ENCODE measurements at regions of chr5 and their contacts with region 1.

Region 1: DNA sequence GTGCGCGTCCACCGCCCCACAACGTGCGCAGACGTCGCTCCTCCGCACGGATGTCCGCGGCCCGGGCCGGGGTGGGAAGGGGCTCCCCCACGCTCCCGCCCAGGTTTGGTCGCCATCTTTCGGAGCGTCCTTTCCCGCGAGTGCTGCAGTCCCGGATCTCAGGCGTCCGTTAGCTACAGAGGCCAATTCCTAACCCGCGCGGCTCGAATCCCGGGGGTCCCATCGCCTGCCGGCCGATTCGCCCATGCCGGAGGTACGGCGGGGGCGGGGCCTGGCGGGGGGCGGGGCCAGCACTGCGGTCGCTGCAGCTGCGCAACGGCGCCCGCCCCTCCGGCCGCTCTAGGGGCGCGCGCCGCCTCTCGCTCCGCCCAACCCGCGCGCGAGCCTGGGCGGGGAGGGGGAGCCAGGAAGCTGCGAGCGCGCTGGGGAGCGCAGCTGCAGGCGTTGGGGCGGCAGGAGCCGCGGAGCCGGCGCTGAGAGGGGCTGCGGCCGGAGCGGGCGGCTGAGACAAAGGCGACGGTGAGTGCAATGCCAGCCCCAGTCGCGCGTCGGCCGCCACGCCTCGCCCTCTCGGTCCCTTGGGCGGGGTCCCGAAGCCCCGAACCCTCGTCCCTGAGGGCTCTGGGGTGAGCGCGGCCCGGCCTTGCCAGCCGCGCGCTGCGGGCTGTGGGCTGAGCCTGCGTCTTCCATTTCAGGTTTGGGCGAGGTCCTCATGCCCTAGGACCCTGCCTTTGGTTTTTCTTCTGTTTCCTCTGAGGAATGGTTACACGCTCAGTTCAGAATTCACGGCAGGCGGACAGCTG is at the start of gene CDC42SE2:
- DNase-seq: peak; percentile 85 to 95 (median 95)
- ATAC-seq: peak; percentile 100
- H3K4me3 ChIP-seq: peak within 1 kb of the TSS; percentile 96
- H3K27ac ChIP-seq: peak within 1 kb of the TSS; percentile 65
- H3K4me1 ChIP-seq: no peaks in the 10 kb centered on the region
- H3K27me3 ChIP-seq: no peaks in the 10 kb centered on the region
- total RNA-seq, gene CDC42SE2: 12.1 to 14.2 (median 13.2) TPM

Region 2: GRCh38 chr5:131165119-131165727 is 98.6 kb before region 1 on chr5 and contains the start of gene HINT1:
- intact Hi-C with region 1: loop called (anchors 10 kb)
- DNase-seq: peak; percentile 92 to 97 (median 97)
- ATAC-seq: peak; percentile 96 to 97
- H3K4me3 ChIP-seq: peak within 1 kb of the TSS; percentile 85
- H3K27ac ChIP-seq: peak within 1 kb of the TSS; percentile 69
- H3K4me1 ChIP-seq: no peaks in the 10 kb centered on the region
- H3K27me3 ChIP-seq: no peaks in the 10 kb centered on the region
- total RNA-seq, gene HINT1: 152 to 188 (median 168) TPM

Region 3: DNA sequence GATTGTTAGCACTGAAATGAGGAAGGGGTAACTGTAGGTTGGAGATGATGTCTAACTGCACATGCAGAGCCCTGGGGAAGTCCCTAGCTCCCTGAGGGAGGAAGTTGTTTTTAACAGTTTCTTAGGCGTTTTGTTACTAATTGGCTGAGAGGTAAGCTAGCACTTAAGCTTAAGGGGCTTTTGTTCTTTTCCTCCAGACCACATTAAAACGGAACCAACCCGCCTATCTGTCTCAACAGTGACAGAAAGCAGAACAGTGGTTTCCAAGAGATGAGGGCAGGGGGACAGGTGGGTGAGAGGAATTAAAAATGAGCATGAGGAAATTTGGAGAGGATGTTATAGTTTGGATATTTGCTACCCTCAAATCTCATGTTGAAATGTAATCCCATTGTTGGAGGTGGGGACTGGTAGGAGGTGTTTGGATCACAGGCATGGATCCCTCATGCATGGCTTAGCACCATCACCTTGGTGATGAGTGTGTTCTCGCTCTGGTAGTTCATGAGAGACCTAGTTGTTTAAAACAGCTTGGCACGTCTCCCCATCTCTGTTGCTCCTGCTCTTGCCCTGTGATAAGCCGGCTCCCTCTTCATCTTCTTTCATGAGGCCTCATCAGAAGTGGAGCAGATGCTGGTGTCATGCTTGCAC is 54.2 kb before region 1 on chr5:
- intact Hi-C with region 1: no loop called
- DNase-seq: no peak
- ATAC-seq: no peak
- H3K4me3 ChIP-seq: no peak overlapping the region
- H3K27ac ChIP-seq: no peak overlapping the region
- H3K4me1 ChIP-seq: peaks cover 1% of the 10 kb centered on the region
- H3K27me3 ChIP-seq: no peaks in the 10 kb centered on the region

Region 4: DNA sequence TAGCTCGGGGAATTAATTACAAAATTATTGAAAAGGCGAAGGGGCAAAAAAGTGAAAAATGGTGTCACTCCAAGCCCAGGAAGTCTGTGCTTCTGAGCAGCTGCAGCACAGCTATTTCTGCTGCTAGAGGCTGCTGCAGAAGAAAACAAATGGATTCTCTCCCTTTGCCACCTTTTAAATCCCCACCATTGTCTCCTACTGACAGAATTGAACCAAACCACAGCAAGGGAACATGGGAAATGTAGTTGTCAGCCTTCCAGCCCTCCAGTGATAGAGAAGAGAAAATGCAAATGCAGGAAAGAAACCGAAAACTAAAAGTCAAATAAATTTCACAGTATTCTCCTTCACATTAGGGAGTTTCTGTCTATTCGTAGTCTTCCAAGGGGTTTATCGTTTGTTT is 33.4 kb before region 1 on chr5:
- intact Hi-C with region 1: no loop called
- DNase-seq: no peak
- ATAC-seq: no peak
- H3K4me3 ChIP-seq: no peak overlapping the region
- H3K27ac ChIP-seq: no peak overlapping the region
- H3K4me1 ChIP-seq: no peaks in the 10 kb centered on the region
- H3K27me3 ChIP-seq: no peaks in the 10 kb centered on the region